RWPE1 (cell line): ENCODE measurements at regions of chr11 and their contacts with region 1.

Region 1: DNA sequence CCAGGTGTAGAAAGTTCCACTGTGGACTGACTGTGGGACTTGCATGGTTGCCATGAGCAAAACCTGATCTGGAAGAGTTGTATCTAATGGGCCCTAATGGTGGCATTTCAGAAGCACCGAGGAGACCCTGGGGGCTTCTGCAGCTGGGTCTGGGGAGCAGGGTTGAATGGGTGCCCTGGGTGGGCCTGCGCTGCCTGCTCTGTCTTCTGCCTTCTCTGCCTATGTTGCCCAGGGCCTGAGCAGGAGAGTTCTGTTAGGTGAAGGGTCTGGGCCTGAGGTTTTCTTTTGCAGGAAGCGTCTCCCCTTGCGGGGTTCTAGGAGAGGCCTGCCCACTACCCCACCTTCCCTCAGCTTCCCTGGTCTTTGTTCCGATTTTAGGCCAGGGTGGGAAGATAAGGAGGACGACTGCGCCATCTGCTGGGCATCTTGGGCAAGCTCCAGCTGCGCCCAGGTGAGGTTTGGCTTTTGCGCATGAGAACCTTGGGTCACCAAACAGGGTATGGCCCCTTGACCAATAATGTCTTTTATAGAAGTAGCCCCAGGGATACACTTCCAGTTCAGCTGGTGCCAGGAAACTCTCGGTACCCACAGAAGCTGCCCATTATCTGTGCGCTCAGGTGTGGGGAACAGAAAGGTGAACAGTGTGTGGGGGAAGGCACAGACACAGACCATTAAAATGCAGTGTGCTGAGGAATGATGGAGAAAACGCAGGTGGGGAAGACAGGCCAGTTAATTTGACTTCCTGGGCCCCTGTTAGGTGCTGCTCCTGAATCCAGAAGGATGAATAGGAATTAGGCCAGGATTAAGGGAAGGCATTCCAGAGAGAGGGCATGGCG is 23.2 kb downstream of the COMMD9 start:
- DNase-seq: peak; percentile 76
- H3K27ac ChIP-seq: no peak overlapping the region
- CTCF ChIP-seq: peak; percentile 84

Region 2: GRCh38 chr11:35617687-35618496 is 648.1 kb before region 1 on chr11 and contains the start of gene FJX1:
- CTCF ChIA-PET with region 1: interaction called, 10 read pairs
- POLR2A ChIA-PET with region 1: no interaction called
- DNase-seq: peak; percentile 90
- H3K27ac ChIP-seq: peak within 1 kb of the TSS; percentile 99
- CTCF ChIP-seq: no peak

Region 3: DNA sequence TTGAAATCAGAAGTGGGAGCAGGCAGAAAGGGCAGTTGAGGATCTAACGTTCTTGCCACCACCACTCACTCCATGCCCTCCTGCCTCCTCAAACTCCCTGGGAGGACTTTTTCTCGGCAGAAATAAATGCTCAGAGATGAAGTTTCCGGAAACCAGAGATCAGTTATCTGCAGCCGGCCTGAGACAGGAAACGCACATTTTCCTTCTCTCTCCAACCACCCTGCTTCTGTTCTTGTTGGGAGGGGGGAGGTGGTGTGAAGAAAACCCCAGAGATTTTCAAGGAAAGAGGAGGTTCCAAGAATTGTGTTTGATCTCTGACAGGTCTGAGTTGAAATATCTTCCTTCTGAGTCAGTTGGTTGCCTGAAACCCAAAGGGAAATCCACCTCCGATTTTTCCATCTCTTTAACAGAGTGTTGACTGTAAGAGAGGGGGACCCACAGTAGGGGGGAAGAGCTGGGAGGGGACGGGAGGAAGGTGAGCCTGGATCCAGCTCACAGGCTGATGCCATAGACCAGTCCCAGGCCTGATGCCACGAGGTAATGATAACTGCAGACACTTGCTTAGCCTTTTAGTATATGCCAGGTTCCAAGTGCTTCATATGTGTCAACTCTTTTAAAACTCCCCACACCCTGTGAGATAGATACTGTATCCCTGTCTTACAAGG is 143.3 kb after region 1 on chr11:
- CTCF ChIA-PET with region 1: no interaction called
- POLR2A ChIA-PET with region 1: no interaction called
- DNase-seq: no peak
- H3K27ac ChIP-seq: no peak overlapping the region
- CTCF ChIP-seq: no peak

Region 4: GRCh38 chr11:36485298-36486002 is 219.4 kb after region 1 on chr11:
- CTCF ChIA-PET with region 1: no interaction called
- POLR2A ChIA-PET with region 1: no interaction called
- DNase-seq: no peak
- H3K27ac ChIP-seq: no peak overlapping the region
- CTCF ChIP-seq: no peak